ENCODE measurements at regions of chr9 and their contacts with region 1.

Region 1: DNA sequence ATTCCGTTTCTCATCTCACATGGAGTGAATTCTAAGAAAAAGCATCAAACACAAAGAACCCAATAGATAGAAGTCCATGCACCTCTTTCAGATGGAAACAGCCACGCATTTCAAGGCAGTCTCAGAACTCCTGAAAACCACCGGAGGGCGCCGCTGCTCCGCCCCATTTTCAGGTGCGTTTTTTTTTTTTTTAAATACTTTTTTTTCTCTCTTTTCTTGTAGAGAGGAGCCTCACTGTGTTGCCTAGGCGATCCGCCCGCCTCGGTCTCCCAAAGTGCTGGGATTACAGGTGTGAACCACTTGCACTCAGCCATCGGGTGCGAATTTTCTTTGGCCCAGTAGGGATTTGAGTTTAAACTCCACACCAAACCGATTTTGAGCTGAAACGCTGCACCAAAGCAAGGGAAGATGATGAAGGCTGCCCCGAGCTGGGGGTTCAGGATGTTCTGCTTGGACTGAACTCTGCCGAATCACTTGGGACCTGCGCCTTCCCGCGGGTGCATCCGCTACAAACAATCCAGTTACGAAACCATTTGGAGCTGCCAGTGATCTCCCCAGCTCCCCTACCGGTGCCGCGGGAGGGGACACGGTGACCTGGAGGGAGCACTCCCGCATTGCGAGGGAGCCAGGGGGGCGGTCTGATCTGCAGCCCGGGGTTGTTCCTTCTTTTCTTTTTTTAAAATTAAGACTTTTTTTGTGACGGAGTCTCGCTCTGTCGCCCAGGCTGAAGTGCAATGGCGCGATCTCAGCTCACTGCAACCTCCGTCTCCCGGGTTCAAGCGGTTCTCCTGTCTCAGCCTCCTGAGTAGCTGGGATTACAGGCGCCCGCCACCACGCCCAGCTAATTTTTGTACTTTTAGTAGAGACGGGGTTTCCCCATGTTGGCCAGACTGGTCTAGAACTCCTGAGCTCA is 1.4 kb downstream of the PTGR1 start:
- DNase-seq: peak; percentile 68
- ATAC-seq: peak; percentile 68
- H3K4me3 Mint-ChIP-seq: peak overlapping the region; percentile 74
- H3K27ac Mint-ChIP-seq: no peak overlapping the region
- H3K4me1 Mint-ChIP-seq: peaks cover 22% of the 10 kb centered on the region
- H3K27me3 Mint-ChIP-seq: peaks cover 40% of the 10 kb centered on the region

Region 2: DNA sequence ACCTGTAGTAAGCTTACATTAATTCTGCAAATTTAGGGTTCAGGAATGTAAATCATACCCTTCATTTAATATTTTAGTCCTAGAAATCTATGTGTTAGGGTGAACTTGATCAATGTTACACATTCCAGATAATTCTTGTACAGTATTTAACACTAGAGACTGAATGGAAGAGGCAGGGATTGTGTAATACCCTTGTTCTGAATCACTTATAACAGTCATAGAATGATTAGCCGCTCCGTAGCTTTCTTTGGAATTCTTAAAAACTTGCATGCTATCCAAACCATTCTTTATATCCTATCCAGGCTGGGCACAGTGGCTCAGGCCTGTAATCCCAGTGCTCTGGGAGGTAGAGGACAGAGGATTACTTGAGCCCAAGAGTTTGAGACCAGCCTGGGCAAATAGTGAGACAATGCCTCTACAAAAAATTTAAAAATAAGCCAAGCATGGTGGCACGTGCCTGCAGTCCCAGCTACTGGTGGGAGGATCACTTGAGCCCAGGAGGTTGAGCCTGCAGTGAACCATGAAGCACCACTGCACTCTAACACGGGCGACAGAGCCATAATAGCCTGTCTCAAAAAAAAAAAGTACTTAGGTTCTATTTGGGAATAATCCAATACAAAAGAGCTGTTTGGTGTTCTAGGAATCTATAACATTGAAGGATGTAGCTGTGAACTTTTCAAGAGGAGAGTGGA is 64.8 kb before region 1 on chr9:
- CTCF ChIA-PET with region 1: no interaction called
- POLR2A ChIA-PET with region 1: no interaction called
- DNase-seq: no peak
- ATAC-seq: no peak
- H3K4me3 Mint-ChIP-seq: no peak overlapping the region
- H3K27ac Mint-ChIP-seq: no peak overlapping the region
- H3K4me1 Mint-ChIP-seq: no peaks in the 10 kb centered on the region
- H3K27me3 Mint-ChIP-seq: no peaks in the 10 kb centered on the region

Region 3: DNA sequence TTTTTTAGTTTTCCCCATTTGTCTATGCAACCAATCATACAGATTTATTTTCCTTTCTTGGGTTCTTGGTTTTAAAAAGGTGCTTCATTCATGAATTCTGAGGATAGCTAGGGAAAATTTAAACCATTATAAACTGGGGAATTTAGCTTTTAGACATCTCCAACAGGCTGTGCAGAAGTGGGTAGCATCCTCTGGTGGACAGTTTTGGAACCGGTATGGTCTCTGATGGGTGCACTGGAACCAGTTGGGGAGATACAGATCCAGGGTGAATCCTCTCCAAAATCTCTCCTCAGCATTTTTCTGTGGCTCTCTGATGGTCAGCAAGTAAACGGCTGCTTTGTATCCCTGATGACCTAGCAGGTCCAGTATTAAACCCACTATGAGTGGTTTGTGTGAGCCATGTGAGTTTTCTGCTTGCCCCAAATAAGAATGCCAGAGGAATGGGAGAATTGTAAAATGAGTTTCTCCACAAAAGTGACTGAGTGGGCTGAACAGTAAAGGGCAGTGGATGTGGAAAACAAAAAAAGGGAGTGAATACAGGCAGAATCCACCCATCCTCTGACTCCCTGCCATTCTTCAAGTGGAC is 23.9 kb after region 1 on chr9:
- CTCF ChIA-PET with region 1: interaction called, 28 read pairs
- POLR2A ChIA-PET with region 1: no interaction called
- DNase-seq: peak; percentile 50
- ATAC-seq: peak; percentile 71
- H3K4me3 Mint-ChIP-seq: no peak overlapping the region
- H3K27ac Mint-ChIP-seq: no peak overlapping the region
- H3K4me1 Mint-ChIP-seq: no peaks in the 10 kb centered on the region
- H3K27me3 Mint-ChIP-seq: peaks cover 10% of the 10 kb centered on the region

Region 4: GRCh38 chr9:111691672-111692329 is 93.7 kb after region 1 on chr9:
- CTCF ChIA-PET with region 1: interaction called, 12 read pairs
- POLR2A ChIA-PET with region 1: no interaction called
- DNase-seq: no peak
- ATAC-seq: no peak
- H3K4me3 Mint-ChIP-seq: no peak overlapping the region
- H3K27ac Mint-ChIP-seq: no peak overlapping the region
- H3K4me1 Mint-ChIP-seq: peaks cover 3% of the 10 kb centered on the region
- H3K27me3 Mint-ChIP-seq: no peaks in the 10 kb centered on the region

Measured in activated CD8-positive, alpha-beta T cell treated with anti-CD3 and anti-CD28 coated beads, Interleukin-2, amount 10 ng/mL, durations not matched to agents 7 days and 5 days (primary cell).